Heart right ventricle (tissue), 16 donors: ENCODE measurements at regions of chr2 and their contacts with region 1.

Region 1: GRCh38 chr2:30300456-30301221 is 69.3 kb downstream of the LBH start:
- DNase-seq: peak in 1 of 2 donors; percentile 43
- ATAC-seq: peak; percentile 78 to 93 (median 86)
- H3K4me3 ChIP-seq: peak overlapping the region in 6 of 10 donors; percentile 18 to 49 (median 34)
- H3K27ac ChIP-seq: peak overlapping the region; percentile 26 to 95 (median 82)
- H3K4me1 ChIP-seq: peaks cover 3 to 33% (median 19%) of the 10 kb centered on the region in 9 donors
- H3K27me3 ChIP-seq: no peaks in the 10 kb centered on the region
- CTCF ChIP-seq: no peak

Region 2: DNA sequence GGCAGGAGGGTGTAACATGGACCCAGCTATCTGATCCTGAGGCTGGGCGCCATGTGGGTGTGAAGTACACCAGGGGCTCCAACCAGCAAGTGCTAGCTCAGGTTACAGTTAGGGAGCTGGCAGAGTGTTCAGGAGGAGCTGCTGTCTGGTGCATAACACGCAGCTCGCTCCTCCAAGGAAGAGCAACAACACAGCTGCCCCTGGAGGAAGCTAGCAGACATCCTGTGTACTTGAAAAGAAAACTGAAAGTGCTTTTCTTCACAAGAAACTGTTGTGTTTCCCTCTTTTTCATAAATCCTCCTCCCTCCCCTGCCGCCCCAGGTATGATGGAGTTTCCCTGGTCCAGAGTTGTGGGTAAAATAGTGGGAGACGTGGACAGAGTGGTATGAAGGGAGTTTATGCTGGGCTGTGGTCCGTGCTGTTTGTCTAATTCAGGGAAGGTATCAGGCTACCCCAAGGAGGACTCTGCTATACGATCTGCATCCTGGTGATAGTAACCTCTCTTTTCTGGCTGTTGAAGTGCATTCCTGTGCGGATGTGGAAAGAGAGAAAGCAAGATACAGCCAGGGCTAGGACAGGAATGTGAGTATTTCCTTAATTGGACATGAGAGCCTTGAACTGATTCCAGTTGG is 75.4 kb before region 1 on chr2:
- intact Hi-C with region 1: no loop called
- DNase-seq: peak; percentile 35 to 59
- ATAC-seq: peak; percentile 44 to 84 (median 72)
- H3K4me3 ChIP-seq: peak overlapping the region in 9 of 10 donors; percentile 6 to 49 (median 40)
- H3K27ac ChIP-seq: peak overlapping the region in 9 of 10 donors; percentile 54 to 91 (median 75)
- H3K4me1 ChIP-seq: peaks cover 16 to 38% (median 24%) of the 10 kb centered on the region in 9 donors
- H3K27me3 ChIP-seq: peaks cover 0 to 7% (median 0%) of the 10 kb centered on the region in 7 donors
- CTCF ChIP-seq: peak in 1 of 9 donors; percentile 17

Region 3: GRCh38 chr2:30249354-30249753 is 51.3 kb before region 1 on chr2:
- intact Hi-C with region 1: loop called in 1 of 10 experiments (anchors 5 kb)
- DNase-seq: no peak
- ATAC-seq: no peak
- H3K4me3 ChIP-seq: no peak overlapping the region
- H3K27ac ChIP-seq: peak overlapping the region in 8 of 10 donors; percentile 5 to 86 (median 20)
- H3K4me1 ChIP-seq: peaks cover 18 to 100% (median 76%) of the 10 kb centered on the region in 9 donors
- H3K27me3 ChIP-seq: no peaks in the 10 kb centered on the region
- CTCF ChIP-seq: no peak

Region 4: GRCh38 chr2:30336978-30337841 is 36.6 kb after region 1 on chr2:
- intact Hi-C with region 1: loop called in 1 of 10 experiments (anchors 5 kb)
- DNase-seq: no peak
- ATAC-seq: no peak
- H3K4me3 ChIP-seq: no peak overlapping the region
- H3K27ac ChIP-seq: peak overlapping the region in 2 of 10 donors; percentile 21 to 73
- H3K4me1 ChIP-seq: peaks cover 7 to 50% (median 39%) of the 10 kb centered on the region in 9 donors
- H3K27me3 ChIP-seq: no peaks in the 10 kb centered on the region
- CTCF ChIP-seq: no peak